ENCODE measurements at regions of chr6 and their contacts with region 1.

Region 1: GRCh38 chr6:104789770-104790190 is 69.9 kb downstream of the HACE1 start:
- DNase-seq: no peak
- H3K4me3 Mint-ChIP-seq: peak overlapping the region; percentile 62
- H3K27ac Mint-ChIP-seq: peak overlapping the region; percentile 85
- H3K4me1 Mint-ChIP-seq: peaks cover 42% of the 10 kb centered on the region
- H3K27me3 Mint-ChIP-seq: no peaks in the 10 kb centered on the region

Region 2: DNA sequence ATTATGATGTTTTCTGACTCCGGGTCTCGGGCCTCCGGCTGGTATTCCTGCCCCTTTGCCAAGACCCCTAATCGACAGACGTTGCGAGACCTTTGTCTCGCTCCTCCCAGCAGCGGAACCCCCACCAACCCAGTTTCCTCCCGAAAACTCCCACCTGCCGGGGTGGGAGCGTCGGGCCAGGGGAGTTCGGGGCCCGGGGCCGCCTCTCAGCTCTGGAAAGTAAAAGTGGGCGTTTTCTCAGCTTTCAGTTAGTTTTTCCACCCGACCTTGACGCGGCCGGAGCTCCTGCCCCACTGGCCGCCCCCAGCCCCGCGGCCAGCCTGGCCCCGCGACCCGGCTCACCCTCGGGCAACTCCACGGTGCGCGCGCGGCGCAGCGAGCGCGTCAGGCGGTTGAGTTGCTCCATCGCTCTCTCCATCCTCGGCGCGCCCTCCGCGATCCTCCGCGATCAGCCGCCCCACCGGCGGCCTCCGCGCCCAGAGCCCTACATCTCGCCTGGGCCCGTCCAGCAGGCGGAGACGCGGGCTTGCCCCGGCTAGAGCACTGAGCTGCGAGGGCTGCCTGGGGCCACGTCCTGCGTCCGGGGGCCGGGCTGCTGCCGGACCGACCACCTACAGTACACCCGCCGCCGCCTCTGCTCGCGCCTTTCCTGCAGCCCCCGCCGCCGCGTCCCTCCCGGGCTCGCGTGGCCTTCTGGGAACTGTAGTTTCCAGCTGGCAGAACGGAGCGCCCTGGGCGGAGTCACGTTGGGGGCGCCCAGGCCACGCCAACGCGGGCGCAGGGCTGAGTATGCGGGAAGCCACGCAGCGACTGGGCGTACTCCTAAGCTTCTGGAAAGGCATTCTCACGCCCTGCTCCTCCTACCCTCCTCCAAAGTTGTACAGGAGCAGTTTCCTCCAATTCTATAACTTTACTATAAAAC is 69.7 kb after region 1 on chr6 and contains the start of gene HACE1:
- intact Hi-C with region 1: loop called (anchors 1 kb)
- DNase-seq: peak; percentile 87
- H3K4me3 Mint-ChIP-seq: peak within 1 kb of the TSS; percentile 95
- H3K27ac Mint-ChIP-seq: peak within 1 kb of the TSS; percentile 82
- H3K4me1 Mint-ChIP-seq: peaks cover 24% of the 10 kb centered on the region
- H3K27me3 Mint-ChIP-seq: peaks cover 2% of the 10 kb centered on the region
- total RNA-seq, gene HACE1: 16.9 and 19.3 TPM in 2 replicates

Region 3: DNA sequence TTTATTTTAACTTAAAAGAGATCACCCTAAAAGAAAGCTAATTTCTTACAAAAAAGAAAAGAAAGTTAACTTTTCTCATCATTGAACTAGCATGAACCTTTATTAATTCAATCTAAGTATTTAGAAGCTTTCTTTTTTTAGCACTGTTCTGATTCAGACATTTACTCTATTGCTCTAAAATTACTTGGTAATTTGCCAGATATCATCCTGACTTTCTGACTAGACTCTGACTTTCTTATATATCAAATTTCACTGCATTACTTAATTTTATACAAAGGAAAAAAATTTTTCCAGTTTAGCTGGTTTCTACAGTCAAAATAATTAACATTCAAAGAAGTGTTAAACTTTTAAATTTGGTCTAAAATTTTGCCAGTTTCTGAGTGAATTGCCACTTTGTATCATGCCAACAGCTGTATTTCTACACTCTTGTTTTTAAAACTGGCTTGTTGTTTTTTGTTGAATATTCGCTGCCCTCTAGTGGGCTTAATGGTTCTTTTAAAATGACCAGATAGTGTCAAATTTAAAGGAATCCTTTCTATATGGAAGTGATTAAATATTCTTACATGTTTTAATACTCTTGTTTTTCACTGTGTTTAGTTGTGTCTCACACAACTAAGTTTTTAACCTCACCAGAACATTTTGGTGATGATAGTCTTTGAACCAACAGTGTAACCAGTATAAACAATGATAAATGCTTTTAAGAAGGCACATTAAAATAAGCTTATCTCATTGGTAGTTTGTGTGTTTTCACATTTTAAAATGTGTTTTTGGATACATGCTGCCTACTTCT is 288.0 kb after region 1 on chr6:
- intact Hi-C with region 1: loop called (anchors 1 kb)
- DNase-seq: no peak
- H3K4me3 Mint-ChIP-seq: no peak overlapping the region
- H3K27ac Mint-ChIP-seq: no peak overlapping the region
- H3K4me1 Mint-ChIP-seq: no peaks in the 10 kb centered on the region
- H3K27me3 Mint-ChIP-seq: peaks cover 21% of the 10 kb centered on the region